Right lobe of liver (tissue), 6 donors: ENCODE measurements at regions of chr4 and their contacts with region 1.

Region 1: DNA sequence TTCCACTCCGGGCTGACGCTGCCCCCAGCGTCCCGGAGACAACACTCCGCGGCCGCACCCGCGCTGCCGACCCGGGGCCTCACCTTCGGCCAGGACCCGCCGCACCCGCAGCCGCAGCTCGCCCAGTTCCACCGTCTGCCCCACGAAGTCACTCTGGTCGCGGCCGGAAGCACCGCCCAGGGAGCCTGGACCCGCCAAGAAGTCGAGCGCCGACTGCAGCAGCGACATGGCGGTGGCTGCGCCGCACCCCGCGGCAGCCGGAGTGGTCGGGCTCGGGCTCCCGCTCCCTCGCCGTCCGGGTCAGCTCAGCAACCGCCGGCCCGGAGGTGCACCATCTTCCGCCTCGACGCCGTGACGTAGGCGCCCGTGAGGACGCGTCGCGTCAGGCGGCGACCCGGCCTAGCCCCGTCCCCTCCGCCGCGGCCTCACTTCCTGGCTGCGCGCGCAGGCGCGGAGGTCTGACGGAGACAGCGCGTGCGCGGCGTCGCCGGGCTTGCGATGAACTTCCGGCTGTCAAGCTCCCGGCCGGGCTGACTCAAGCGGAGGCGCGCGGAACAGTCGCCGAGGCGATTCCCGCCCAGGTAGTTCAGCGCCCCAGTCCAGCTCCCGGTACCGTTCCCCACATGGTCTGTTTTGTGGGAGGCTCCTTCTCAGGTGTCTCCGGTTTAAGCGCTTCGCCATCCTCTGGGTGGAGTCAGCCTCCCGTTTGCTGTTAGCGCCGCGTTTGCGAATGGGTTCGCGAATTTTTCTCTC is at the starts of genes GAK and TMEM175:
- DNase-seq: peak; percentile 97 to 98 (median 97)
- ATAC-seq: peak; percentile 95 to 98 (median 97)
- H3K4me3 ChIP-seq: peak within 1 kb of the TSS; percentile 96 to 100 (median 98)
- H3K27ac ChIP-seq: peak within 1 kb of the TSS; percentile 63 to 87 (median 87)
- H3K4me1 ChIP-seq: peaks cover 0 to 28% (median 9%) of the 10 kb centered on the region in 4 donors
- H3K27me3 ChIP-seq: no peaks in the 10 kb centered on the region
- CTCF ChIP-seq: no peak
- POLR2A ChIP-seq: peak; percentile 89
- total RNA-seq, gene GAK: 53.2 to 85.0 (median 64.5) TPM
- total RNA-seq, gene TMEM175: 22.0 to 31.8 (median 23.6) TPM

Region 2: GRCh38 chr4:973431-974397 is 41.6 kb after region 1 on chr4 and contains the start of gene DGKQ:
- intact Hi-C with region 1: loop called in 1 of 2 experiments (anchors 5 kb)
- DNase-seq: peak; percentile 93
- ATAC-seq: peak; percentile 97 to 99 (median 98)
- H3K4me3 ChIP-seq: peak within 1 kb of the TSS; percentile 61 to 73 (median 68)
- H3K27ac ChIP-seq: no peak within 1 kb of the TSS
- H3K4me1 ChIP-seq: peaks cover 0 to 21% (median 5%) of the 10 kb centered on the region in 4 donors
- H3K27me3 ChIP-seq: no peaks in the 10 kb centered on the region
- CTCF ChIP-seq: no peak
- POLR2A ChIP-seq: peak; percentile 16
- total RNA-seq, gene DGKQ: 4.6 to 10.5 (median 5.7) TPM

Region 3: DNA sequence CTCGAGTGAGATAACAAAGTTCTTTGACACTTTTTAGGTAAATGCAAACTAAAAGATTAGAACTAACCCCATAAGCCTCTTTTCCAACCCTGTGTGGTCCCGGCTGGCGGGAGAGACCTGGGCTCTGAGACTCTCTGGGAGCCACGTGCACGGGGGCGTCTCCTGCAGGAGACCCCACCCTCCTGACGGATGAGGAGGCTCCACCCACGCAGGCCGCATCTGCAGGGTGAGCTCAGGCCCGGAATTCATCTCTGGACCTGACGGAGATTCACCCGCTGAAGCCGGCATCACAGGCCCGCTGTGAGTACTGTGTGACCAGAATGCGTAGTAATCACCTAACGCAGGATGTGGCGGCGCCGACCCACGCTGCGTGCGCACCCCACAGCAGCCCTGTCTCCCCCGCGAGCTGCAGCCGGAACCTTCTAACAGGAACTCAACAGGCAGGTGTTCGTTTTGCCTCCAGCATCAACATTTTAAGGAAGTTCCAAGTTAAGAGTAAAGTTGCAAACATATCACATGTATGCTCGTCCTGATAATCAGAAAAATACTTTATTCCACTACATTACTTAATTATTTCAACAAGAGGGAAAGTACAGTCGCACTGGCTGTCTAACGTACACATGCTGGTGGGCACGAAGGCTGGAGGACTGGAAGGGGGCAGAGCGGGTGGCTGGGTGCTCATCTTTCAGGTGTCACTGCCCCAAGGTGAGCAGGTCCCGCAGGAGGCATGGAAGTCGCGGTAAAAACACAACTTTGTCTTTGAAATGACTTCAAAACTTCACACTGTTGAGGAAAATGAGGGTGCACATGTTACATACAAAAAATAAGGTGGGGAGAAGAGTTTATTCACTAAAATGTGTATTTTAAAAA is 123.8 kb after region 1 on chr4:
- intact Hi-C with region 1: no loop called
- DNase-seq: peak in 2 of 3 donors; percentile 42 to 55
- ATAC-seq: peak; percentile 45 to 63 (median 53)
- H3K4me3 ChIP-seq: no peak overlapping the region
- H3K27ac ChIP-seq: no peak overlapping the region
- H3K4me1 ChIP-seq: no peaks in the 10 kb centered on the region
- H3K27me3 ChIP-seq: peaks cover 0 to 4% of the 10 kb centered on the region in 2 donors
- CTCF ChIP-seq: no peak
- POLR2A ChIP-seq: no peak